Heart right ventricle (tissue), 16 donors: ENCODE measurements at regions of chrX and their contacts with region 1.

Region 1: GRCh38 chrX:109312757-109313156 is 169.1 kb downstream of the GUCY2F start:
- DNase-seq: no peak
- ATAC-seq: no peak
- H3K4me3 ChIP-seq: no peak overlapping the region
- H3K27ac ChIP-seq: no peak overlapping the region
- H3K4me1 ChIP-seq: no peaks in the 10 kb centered on the region
- H3K27me3 ChIP-seq: peaks cover 0 to 9% (median 0%) of the 10 kb centered on the region in 7 donors
- CTCF ChIP-seq: no peak

Region 2: DNA sequence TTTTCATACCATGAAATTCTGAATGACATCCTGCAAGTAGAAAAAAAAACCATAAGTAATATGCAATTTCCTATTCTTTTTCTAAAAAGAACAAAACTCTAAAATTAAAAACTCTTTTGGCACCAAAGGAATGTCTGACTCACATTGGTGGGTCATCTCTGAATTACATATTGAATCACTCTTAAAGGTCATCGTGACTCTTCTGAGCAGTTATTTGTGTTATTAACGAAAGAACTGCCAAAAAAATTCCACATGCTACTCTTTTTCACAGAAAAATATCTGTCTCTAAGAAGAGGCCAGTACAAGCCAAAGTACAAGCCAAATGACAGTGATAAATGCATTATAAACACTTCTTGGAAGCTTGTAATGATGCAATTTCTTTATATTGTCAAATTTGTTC is 113.0 kb before region 1 on chrX:
- intact Hi-C with region 1: no loop called
- DNase-seq: no peak
- ATAC-seq: peak in 1 of 8 donors; percentile 42
- H3K4me3 ChIP-seq: no peak overlapping the region
- H3K27ac ChIP-seq: no peak overlapping the region
- H3K4me1 ChIP-seq: no peaks in the 10 kb centered on the region
- H3K27me3 ChIP-seq: no peaks in the 10 kb centered on the region
- CTCF ChIP-seq: no peak

Region 3: DNA sequence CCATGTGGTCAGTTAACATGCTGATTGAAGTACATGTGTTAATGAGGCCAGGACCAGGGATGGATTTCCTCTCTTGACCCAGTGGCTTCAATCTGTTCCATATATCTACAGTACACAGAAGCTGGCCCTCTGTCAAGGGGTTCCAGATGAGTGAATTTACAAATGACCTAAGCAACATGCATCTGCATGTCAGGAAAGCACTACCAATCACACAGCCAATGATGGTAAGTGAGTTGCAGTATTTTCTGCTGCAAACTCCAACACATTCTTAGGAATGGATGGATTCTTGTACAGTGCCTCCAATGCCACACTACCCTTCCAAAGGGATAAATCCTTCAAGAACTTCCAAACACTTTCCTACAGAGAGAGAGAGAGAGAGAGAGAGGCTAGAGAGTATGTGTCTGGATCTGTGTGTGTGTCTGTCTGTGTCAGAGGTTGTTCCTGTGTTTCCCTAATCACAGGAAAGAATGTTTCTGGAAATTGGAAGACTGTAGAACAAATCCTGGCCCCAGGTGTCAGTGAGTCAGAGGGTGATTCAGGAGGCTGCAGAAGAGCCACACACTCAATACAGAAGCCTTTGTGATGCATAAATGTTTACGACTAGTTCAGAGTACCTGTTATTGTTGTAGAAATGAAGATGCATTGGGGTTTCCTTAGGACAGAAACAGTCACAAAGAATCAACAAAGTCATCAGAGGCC is 61.7 kb after region 1 on chrX:
- intact Hi-C with region 1: loop called in 1 of 10 experiments (anchors 5 kb)
- DNase-seq: no peak
- ATAC-seq: no peak
- H3K4me3 ChIP-seq: no peak overlapping the region
- H3K27ac ChIP-seq: no peak overlapping the region
- H3K4me1 ChIP-seq: no peaks in the 10 kb centered on the region
- H3K27me3 ChIP-seq: peaks cover 0 to 33% (median 0%) of the 10 kb centered on the region in 7 donors
- CTCF ChIP-seq: no peak